ENCODE measurements at regions of chr5 and their contacts with region 1.

Region 1: GRCh38 chr5:59608745-59609144 is 284.8 kb downstream of the PDE4D start:
- DNase-seq: no peak
- ATAC-seq: peak in 1 of 4 donors; percentile 24
- H3K4me3 ChIP-seq: no peak overlapping the region
- H3K27ac ChIP-seq: no peak overlapping the region
- H3K4me1 ChIP-seq: peaks cover 5% of the 10 kb centered on the region
- H3K27me3 ChIP-seq: no peaks in the 10 kb centered on the region
- CTCF ChIP-seq: no peak

Region 2: DNA sequence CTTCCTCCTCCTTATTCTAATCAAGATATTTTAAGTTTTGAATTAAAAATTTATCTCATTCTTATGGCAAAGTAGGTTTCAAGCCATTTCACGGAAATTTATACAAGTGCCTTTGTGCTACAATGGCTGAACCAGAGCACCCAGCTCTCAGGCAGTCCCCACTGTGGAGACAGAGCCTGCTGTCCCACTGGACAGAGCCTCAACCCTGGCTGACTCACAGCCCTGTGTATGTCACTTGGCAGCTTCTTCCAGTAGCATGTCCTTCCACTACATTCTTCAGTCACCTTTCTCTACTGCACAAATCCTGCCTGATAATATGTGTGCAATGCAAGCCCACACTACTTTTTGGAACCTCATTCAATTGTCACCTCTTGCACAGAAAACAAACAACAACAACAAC is 31.7 kb after region 1 on chr5:
- intact Hi-C with region 1: loop called in 1 of 2 experiments (anchors 5 kb)
- DNase-seq: peak; percentile 41 to 78
- ATAC-seq: peak; percentile 99 to 100 (median 100)
- H3K4me3 ChIP-seq: no peak overlapping the region
- H3K27ac ChIP-seq: peak overlapping the region; percentile 68
- H3K4me1 ChIP-seq: peaks cover 11% of the 10 kb centered on the region
- H3K27me3 ChIP-seq: no peaks in the 10 kb centered on the region
- CTCF ChIP-seq: no peak

Region 3: DNA sequence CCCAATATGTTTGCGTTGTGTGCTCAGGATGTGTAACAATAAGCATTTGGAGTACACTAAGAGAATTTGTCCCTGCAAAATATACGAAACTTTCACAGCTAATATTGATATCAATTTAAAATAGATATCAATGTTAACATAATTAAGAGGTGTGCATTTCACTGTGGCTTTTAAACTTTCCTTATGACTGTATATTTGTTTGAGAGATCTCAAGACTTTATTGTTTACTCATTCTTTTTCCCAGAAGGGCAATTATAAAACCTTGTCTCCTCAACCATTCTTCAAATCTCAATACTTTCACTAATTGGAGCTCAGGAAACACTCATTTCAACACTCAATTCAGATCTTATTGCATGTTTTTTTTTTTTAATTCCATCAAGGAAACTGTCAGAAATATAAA is 43.7 kb after region 1 on chr5:
- intact Hi-C with region 1: loop called in 1 of 2 experiments (anchors 5 kb)
- DNase-seq: no peak
- ATAC-seq: no peak
- H3K4me3 ChIP-seq: no peak overlapping the region
- H3K27ac ChIP-seq: no peak overlapping the region
- H3K4me1 ChIP-seq: peaks cover 12% of the 10 kb centered on the region
- H3K27me3 ChIP-seq: no peaks in the 10 kb centered on the region
- CTCF ChIP-seq: no peak

Region 4: DNA sequence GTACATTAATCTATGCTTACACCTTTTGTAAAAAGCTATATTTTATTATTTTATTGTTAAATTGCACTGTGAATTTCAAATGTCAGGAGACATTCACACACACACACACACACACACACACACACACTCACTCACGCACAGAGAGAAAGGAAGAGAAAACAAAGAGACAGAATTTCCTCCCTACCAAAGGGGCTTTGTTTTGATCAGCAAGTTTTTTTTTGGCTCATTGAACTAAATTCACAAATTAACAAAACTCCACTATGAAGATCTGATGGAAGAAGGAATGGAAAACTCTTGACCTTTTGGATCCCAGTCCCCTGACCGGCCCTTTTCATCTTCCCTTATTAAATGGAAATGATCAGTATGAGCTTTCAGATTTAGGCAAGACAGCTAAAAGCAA is 123.6 kb after region 1 on chr5:
- intact Hi-C with region 1: no loop called
- DNase-seq: no peak
- ATAC-seq: no peak
- H3K4me3 ChIP-seq: no peak overlapping the region
- H3K27ac ChIP-seq: no peak overlapping the region
- H3K4me1 ChIP-seq: no peaks in the 10 kb centered on the region
- H3K27me3 ChIP-seq: no peaks in the 10 kb centered on the region
- CTCF ChIP-seq: no peak